Tibial artery (tissue), 4 donors: ENCODE measurements at regions of chr3 and their contacts with region 1.

Region 1: DNA sequence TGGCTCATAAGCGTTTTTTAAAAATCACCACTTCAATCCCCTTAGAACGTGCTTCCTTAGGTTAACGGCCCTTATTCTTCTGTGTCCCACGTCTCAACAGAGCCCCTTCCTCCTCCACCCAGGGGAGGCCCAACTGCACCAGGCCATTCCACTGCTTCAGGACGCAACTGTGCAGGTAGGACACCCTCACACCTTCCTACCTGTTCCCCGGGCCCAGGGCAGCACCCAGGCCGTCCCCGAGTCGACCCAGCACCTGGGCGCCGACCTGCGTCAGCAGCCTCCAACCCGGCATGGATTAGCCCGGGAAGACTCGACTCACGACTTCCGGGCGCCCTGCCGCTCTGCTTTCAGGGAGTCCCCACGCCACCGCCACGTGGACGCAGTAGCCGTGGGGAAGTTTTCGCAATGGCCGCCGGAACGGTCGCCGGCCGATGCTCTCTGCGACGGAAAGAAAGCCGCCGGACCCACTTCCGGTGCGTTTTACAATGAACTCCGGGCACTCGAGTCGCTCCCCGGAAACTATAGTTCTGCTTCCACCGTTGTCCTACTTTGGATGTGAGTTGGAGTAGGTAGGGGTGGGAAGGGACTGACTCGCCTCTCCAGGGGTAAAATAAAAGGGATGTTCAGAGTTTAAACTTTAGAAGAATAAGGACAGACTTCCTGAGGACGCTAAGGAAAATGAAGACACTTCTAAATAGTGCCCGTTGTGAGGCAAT is at the start of gene MRPL3:
- DNase-seq: peak; percentile 77 to 88
- H3K4me3 ChIP-seq: peak within 1 kb of the TSS; percentile 84 to 93
- H3K27ac ChIP-seq: peak within 1 kb of the TSS; percentile 74 to 82
- H3K4me1 ChIP-seq: peaks cover 0 to 27% (median 7%) of the 10 kb centered on the region in 4 donors
- H3K27me3 ChIP-seq: no peaks in the 10 kb centered on the region
- CTCF ChIP-seq: no peak

Region 2: DNA sequence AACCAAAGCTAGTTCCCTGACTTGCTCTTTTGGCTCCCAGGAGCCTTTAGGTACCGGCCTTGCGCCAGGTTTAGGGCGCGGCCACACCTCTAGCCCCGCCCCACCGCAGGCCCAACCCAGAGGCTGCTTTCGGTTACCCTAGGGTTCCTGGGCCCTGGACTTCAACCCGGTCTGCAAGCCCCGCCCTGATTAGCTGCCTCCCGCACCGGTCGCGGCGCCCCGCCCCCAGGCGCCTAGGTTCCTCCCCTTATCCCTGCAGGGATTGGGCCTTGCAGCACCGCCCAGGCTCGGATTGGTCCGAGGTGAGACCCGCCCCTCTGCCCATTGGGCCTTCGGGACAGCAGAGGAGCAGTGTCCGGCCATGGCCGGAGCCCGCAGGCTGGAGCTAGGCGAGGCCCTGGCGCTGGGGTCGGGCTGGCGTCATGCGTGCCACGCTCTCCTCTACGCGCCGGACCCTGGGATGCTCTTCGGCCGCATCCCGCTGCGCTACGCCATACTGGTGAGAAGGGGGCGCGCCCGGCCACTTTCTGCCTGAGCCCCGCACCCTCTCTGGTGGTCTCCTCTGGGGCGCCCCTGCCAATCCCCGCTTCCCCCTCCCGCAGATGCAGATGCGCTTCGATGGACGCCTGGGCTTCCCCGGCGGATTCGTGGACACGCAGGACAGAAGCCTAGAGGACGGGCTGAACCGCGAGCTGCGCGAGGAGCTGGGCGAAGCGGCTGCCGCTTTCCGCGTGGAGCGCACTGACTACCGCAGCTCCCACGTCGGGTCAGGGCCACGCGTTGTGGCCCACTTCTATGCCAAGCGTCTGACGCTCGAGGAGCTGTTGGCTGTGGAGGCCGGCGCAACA is 121.0 kb before region 1 on chr3 and contains the start of gene NUDT16:
- intact Hi-C with region 1: loop called (anchors 5 kb)
- DNase-seq: peak; percentile 100
- H3K4me3 ChIP-seq: peak within 1 kb of the TSS; percentile 85 to 96
- H3K27ac ChIP-seq: peak within 1 kb of the TSS; percentile 94 to 98
- H3K4me1 ChIP-seq: peaks cover 0 to 32% (median 17%) of the 10 kb centered on the region in 4 donors
- H3K27me3 ChIP-seq: no peaks in the 10 kb centered on the region
- CTCF ChIP-seq: no peak

Region 3: GRCh38 chr3:131526801-131527347 is 24.2 kb after region 1 on chr3:
- intact Hi-C with region 1: no loop called
- DNase-seq: no peak
- H3K4me3 ChIP-seq: peak overlapping the region in 1 of 2 donors; percentile 39
- H3K27ac ChIP-seq: no peak overlapping the region
- H3K4me1 ChIP-seq: peaks cover 0 to 5% (median 2%) of the 10 kb centered on the region in 4 donors
- H3K27me3 ChIP-seq: peaks cover 0 to 18% of the 10 kb centered on the region in 2 donors
- CTCF ChIP-seq: no peak

Region 4: GRCh38 chr3:131543714-131544113 is 41.0 kb after region 1 on chr3:
- intact Hi-C with region 1: no loop called
- DNase-seq: peak in 1 of 2 donors; percentile 23
- H3K4me3 ChIP-seq: no peak overlapping the region
- H3K27ac ChIP-seq: no peak overlapping the region
- H3K4me1 ChIP-seq: peaks cover 0 to 19% (median 2%) of the 10 kb centered on the region in 4 donors
- H3K27me3 ChIP-seq: no peaks in the 10 kb centered on the region
- CTCF ChIP-seq: no peak

Region 5: GRCh38 chr3:131658108-131658507 is 155.4 kb after region 1 on chr3:
- intact Hi-C with region 1: no loop called
- DNase-seq: no peak
- H3K4me3 ChIP-seq: no peak overlapping the region
- H3K27ac ChIP-seq: no peak overlapping the region
- H3K4me1 ChIP-seq: no peaks in the 10 kb centered on the region
- H3K27me3 ChIP-seq: no peaks in the 10 kb centered on the region
- CTCF ChIP-seq: no peak

Region 6: DNA sequence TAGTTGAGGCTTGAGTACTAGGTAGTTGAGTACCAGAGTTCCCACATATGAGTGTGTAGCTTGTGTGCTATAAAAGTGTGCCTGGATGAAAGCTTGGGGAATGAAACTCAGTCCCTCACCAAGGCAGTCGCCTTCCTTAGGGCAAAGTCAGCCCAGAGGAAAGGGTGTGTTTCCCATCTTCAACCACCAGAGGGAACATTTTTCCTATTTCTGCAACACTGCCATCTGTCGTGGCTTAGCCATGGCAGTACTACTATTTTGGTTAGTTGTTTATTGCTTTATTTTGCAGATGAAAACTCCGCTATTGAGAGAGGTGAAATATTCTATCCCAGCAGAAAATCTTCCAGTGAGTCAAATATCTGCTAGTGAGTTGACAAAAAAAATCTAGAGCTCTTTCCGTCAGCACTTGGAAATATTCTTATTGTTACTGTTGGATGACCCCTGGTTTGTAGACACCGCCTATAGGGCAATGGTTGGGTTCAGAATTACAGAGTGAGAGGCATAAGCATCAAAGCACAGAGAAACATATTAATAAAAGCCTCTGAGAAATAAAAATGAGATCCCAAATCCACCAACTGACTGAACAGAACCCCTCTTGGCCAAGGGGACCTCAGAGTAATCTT is 292.2 kb after region 1 on chr3:
- intact Hi-C with region 1: no loop called
- DNase-seq: no peak
- H3K4me3 ChIP-seq: no peak overlapping the region
- H3K27ac ChIP-seq: no peak overlapping the region
- H3K4me1 ChIP-seq: peaks cover 0 to 7% (median 0%) of the 10 kb centered on the region in 4 donors
- H3K27me3 ChIP-seq: peaks cover 0 to 3% of the 10 kb centered on the region in 2 donors
- CTCF ChIP-seq: peak; percentile 64 to 70